Right ventricle myocardium superior (tissue), 1 donor: ENCODE measurements at regions of chr11 and their contacts with region 1.

Region 1: DNA sequence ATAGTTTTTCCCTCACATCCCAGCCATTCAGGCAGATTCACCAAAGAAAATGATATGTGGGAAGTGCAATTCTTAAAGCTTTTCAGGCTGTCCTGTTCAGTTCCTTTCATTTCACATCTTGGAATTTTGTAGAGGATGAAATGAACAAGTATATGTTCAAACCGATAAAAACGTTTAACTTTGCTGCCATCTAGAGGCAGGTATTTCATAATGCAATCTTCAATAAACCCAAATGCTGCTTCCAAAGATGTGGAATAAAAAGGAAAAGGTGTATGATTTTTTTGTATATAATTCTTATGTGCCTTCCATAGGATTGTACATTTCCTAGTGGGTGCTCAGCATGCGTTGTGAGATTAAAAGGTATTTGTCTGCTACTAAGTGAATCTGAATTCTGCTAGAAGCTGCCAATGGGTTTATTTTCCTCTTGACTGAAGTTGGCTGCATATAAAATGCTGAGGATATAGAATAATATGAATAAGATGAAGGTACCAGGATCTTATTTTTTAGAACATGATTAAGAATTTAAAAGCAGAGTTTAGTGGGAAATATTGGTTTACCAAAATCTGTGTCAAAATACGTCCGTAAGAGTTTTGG is 199.3 kb downstream of the PGR start:
- DNase-seq: no peak
- ATAC-seq: peak; percentile 70

Region 2: DNA sequence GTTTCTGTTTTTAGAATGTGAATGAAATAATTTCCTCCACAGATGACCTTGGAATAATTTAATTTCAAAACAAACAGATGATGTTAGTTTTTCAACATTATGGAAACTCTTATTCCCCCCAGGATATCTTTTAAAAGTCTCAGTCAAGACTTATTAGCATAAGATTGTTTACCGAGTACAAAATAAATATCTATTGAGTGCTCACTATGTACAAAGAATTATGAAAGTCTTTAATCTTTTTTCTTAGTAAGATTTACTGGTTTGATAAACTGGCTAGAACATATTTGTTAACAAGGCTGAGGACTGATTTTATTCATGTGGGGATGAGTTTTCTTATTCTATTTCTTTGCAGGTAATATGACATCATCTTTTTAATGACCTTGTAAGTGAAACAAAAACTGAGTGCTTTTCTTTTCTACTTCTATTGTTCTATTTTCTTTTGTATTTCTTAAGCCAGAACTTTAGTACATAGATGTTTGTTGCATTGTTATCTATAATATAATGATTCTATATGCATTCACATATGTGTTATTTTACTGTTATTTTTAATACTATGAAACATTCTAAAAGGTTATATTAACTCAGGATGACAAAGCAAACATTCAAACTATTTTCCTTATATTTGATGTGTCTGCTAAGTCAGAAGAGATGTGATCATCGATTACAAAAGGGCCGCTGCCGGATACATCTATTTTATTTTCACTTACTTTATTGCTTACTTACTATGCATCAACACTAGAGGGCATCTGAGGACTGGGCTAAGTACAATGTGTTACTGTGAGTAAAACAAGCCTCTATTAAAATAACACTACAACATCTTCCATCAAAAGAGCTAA is 354.2 kb before region 1 on chr11:
- intact Hi-C with region 1: loop called (anchors 5 kb)
- DNase-seq: no peak
- ATAC-seq: peak; percentile 95

Region 3: DNA sequence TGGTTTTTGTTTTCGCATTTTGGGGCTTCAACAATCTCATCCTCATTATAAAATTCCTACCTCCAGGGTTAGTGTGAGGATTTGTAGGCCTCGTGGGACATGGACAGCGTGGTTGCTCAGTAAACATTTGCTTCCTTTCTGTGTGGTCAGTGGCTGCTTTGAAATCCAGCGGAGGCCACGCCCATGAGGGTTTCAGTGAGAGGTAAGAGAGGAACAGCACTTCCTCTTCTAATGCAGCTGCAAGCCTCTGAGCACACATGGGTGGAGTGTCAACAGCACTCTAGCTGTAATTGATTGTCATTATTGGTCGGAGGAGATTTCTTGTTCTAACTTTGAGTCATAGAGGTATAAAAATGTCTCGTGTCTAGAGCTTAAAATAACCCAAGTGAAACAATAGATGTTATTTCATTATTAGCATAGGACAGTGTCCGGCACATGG is 249.2 kb before region 1 on chr11:
- intact Hi-C with region 1: loop called (anchors 5 kb)
- DNase-seq: peak; percentile 79
- ATAC-seq: peak; percentile 72

Region 4: GRCh38 chr11:101003468-101003867 is 73.2 kb after region 1 on chr11:
- intact Hi-C with region 1: no loop called
- DNase-seq: no peak
- ATAC-seq: no peak